Activated CD8-positive, alpha-beta T cell treated with anti-CD3 and anti-CD28 coated beads, Interleukin-2, amount 10 ng/mL, durations not matched to agents 7 days and 5 days (primary cell): ENCODE measurements at regions of chr19 and their contacts with region 1.

Region 1: GRCh38 chr19:861763-862580 is 2.5 kb downstream of the CFD start:
- DNase-seq: peak; percentile 63
- ATAC-seq: peak; percentile 16
- H3K4me3 Mint-ChIP-seq: no peak overlapping the region
- H3K27ac Mint-ChIP-seq: no peak overlapping the region
- H3K4me1 Mint-ChIP-seq: peaks cover 18% of the 10 kb centered on the region
- H3K27me3 Mint-ChIP-seq: peaks cover 14% of the 10 kb centered on the region

Region 2: DNA sequence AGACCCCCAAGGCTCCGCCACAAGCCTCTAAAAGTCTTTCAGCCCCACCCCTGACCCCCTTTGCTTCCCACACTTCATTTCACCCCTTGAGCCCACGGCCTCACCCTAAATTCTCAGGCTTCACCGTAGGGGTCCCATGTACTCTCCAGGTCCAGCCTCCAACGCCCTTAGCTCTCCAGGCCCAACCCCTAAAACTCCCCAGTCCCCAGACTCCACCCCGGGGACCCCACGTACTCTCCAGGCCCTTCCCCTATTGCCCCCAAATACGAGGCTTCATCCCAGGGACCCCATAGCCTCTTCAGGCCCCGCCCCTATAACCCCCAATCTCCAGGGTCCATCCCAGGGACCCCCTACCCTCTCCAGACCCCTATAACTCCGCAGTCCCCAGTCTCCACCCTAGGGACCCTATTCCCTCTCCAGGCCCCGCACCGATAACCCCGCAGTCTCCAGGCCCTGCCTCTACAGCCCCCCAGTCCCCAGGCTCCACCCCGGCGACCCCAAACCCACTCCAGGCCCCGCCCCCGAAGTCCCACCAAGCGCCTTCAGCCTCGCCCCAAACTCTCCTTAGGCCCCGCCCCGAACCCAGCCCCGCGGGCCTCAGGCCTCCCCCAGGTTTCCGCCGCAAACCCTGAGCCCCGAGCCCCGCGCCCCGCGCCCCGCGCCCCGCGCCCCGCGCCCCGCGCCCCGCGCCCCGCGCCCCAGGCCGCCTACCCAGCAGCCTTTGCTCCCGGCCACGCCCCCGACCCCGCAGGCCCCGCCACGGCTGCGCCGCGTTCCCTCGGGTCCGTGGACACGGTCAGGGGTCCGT is 30.5 kb after region 1 on chr19:
- CTCF ChIA-PET with region 1: interaction called, 14 read pairs
- POLR2A ChIA-PET with region 1: interaction called, 3 read pairs
- DNase-seq: peak; percentile 60
- ATAC-seq: peak; percentile 54
- H3K4me3 Mint-ChIP-seq: peak overlapping the region; percentile 86
- H3K27ac Mint-ChIP-seq: peak overlapping the region; percentile 99
- H3K4me1 Mint-ChIP-seq: peaks cover 31% of the 10 kb centered on the region
- H3K27me3 Mint-ChIP-seq: no peaks in the 10 kb centered on the region

Region 3: DNA sequence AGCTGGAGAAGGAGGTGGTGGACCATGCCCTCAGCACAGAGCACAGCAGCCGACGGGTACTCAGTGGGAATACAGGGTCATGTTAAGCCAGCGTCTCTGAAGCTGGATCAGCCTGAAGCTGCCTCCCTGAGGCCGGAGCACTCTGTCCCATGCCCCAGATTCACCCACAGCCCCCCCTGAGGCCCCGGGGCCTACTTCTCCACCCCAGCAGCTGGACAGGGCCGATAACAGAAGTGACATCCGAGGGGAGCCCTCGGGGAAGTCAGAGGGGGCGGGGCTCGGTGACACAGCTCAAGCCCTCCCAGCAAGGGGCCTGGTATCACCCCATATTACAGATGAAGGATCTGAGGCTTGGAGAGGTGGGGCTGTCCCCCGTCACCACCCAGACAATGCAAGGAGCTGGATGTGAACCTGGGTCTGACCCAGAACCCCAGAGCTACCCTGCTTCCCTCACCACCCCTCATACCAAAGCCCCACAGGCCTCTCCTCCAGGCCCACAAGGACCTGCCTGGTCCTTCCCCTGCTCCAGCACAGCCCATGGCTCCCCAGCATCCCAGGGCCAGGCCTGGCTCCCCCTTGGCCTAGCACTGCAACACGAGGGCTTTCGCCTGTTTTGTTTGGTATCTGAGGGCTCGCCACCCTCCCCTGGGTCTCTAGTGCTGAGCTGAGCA is 45.3 kb after region 1 on chr19:
- CTCF ChIA-PET with region 1: interaction called, 36 read pairs
- POLR2A ChIA-PET with region 1: no interaction called
- DNase-seq: peak; percentile 52
- ATAC-seq: no peak
- H3K4me3 Mint-ChIP-seq: no peak overlapping the region
- H3K27ac Mint-ChIP-seq: peak overlapping the region; percentile 72
- H3K4me1 Mint-ChIP-seq: peaks cover 54% of the 10 kb centered on the region
- H3K27me3 Mint-ChIP-seq: no peaks in the 10 kb centered on the region

Region 4: GRCh38 chr19:917323-918151 is 55.6 kb after region 1 on chr19 and contains the start of gene KISS1R:
- CTCF ChIA-PET with region 1: interaction called, 47 read pairs
- POLR2A ChIA-PET with region 1: interaction called, 6 read pairs
- DNase-seq: peak; percentile 59
- ATAC-seq: peak; percentile 9
- H3K4me3 Mint-ChIP-seq: no peak within 1 kb of the TSS
- H3K27ac Mint-ChIP-seq: no peak within 1 kb of the TSS
- H3K4me1 Mint-ChIP-seq: peaks cover 20% of the 10 kb centered on the region
- H3K27me3 Mint-ChIP-seq: peaks cover 6% of the 10 kb centered on the region
- total RNA-seq, gene KISS1R: 0.55 to 1.1 TPM

Region 5: DNA sequence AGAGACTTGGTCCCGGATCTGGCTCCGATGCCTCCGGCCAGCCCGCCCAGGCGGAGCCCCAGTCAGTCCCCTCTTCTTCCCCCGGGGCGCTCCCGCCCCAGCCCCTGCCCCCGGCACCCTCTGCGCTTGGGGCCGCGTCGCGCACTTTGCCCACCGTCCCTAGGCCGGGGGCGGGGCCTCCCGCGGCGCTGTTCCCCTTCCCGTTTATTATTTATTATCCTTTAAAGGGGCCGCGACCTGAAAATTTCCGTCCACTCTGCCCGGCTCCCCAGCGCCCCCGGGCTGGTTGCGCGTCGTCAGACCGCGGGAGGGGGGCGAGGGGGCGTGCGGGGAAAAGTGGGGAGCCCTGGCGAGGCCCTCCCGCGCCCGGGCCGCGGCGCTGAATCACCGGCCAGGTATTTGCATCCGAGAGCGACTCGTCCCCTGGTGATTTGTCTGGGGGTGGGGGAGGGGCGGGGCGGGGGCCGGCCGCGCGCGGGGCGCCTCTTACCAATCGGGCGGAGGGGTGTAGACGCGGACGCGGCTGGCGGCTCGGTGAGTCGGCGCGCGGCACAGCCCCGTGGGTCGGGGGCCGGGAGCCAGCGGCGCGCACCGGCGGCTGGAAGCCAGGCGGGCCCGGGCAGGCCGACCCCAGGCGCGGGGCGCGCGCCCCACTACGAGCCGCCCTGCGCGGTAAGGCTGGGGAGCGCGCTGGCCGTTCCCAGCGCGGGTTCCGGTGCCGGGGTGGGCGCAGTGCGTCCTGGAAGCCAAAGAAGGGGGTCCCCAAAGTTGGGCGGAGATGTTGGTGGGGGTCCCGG is 63.8 kb after region 1 on chr19 and contains the start of gene ARID3A:
- CTCF ChIA-PET with region 1: interaction called, 47 read pairs
- POLR2A ChIA-PET with region 1: interaction called, 3 read pairs
- DNase-seq: peak; percentile 83
- ATAC-seq: peak; percentile 68
- H3K4me3 Mint-ChIP-seq: peak within 1 kb of the TSS; percentile 79
- H3K27ac Mint-ChIP-seq: peak within 1 kb of the TSS; percentile 89
- H3K4me1 Mint-ChIP-seq: peaks cover 18% of the 10 kb centered on the region
- H3K27me3 Mint-ChIP-seq: no peaks in the 10 kb centered on the region
- total RNA-seq, gene ARID3A: 26.7 to 27.7 TPM

Region 6: DNA sequence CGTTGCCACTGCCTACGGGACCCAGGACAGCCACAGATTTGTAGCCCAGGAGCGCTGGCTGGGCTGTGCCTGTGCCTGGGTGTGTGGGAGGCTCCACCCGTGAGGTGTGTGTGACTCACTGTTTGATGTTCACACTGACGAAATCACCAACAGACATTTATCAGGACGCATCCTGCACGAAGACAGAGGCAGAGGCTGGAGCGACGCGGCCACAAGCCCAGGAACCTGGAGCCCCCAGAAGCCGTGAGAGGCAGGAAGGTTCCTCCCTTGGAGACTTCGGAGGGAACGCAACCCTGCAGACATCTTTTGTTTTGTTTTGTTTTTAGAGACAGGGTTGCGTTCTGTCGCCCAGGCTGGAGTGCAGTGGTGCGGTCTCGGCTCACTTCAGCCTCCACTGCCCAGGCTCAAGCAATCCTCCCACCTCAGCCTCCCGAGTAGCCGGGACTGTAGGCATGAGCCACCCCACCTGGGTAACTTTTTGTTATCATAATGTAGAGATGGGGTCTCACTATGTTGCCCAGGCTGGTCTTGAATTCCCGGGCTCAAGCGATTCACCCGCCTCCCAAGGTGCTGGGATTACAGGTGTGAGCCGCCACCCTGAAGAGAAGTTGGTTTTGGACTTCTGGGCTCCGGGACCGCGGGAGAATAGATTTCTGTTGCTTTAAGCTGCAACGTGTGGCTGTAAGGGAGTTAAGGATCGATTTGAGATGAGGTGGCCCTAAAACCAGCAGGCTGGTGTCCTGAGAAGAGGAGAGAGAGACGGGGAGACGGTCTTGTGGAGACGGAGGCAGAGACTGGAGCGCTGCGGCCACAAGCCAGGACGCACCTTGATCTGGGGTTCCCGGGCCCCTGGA is 97.2 kb after region 1 on chr19:
- CTCF ChIA-PET with region 1: no interaction called
- POLR2A ChIA-PET with region 1: no interaction called
- DNase-seq: no peak
- ATAC-seq: no peak
- H3K4me3 Mint-ChIP-seq: no peak overlapping the region
- H3K27ac Mint-ChIP-seq: no peak overlapping the region
- H3K4me1 Mint-ChIP-seq: peaks cover 4% of the 10 kb centered on the region
- H3K27me3 Mint-ChIP-seq: no peaks in the 10 kb centered on the region

Region 7: GRCh38 chr19:984165-984967 is 122.4 kb after region 1 on chr19 and contains the start of gene WDR18:
- CTCF ChIA-PET with region 1: interaction called, 53 read pairs
- POLR2A ChIA-PET with region 1: no interaction called
- DNase-seq: peak; percentile 94
- ATAC-seq: peak; percentile 91
- H3K4me3 Mint-ChIP-seq: peak within 1 kb of the TSS; percentile 91
- H3K27ac Mint-ChIP-seq: peak within 1 kb of the TSS; percentile 90
- H3K4me1 Mint-ChIP-seq: peaks cover 34% of the 10 kb centered on the region
- H3K27me3 Mint-ChIP-seq: no peaks in the 10 kb centered on the region
- total RNA-seq, gene WDR18: 51.5 to 53.0 TPM